ENCODE measurements at regions of chr1 and their contacts with region 1.

Region 1: DNA sequence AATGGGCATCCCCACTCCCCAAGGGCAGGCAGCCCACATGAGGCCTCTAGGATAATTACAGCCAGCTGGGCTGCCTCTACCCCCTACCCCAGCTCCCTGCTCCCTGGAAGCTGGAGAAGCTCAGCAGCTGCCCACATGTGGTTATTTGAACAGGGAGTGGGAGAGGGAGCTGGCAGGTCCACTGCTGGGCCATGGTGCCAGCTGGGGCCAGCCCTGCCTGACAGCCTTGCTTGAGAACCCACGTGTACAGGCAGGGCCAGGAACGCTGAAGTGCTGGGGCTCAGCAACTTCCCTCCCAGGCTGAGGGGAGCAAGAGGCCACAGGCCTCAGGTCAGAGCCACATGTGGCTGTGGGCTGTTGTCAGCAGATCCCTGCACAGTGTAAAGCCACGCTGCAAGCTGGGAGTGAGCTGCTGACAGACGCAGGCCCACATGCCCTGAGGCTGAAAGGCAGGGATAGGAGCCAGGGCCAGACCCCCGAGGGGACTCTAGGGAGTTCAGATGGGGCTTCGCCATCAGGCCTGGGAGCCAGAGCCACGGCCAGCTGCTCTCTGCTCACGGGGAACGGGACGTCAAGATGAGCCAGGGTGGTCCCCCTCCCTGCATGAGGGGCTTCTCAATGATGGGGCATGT is 129.0 kb downstream of the SYF2 start:
- DNase-seq: no peak
- H3K4me3 ChIP-seq: no peak overlapping the region
- H3K27ac ChIP-seq: no peak overlapping the region
- H3K27me3 ChIP-seq: peaks cover 0 to 17% (median 3%) of the 10 kb centered on the region in 45 donors
- CTCF ChIP-seq: no peak

Region 2: GRCh38 chr1:24847995-24848881 is 255.0 kb before region 1 on chr1:
- intact Hi-C with region 1: loop called (anchors 5 kb)
- DNase-seq: peak; percentile 62 to 94 (median 92)
- H3K4me3 ChIP-seq: peak overlapping the region; percentile 44 to 80 (median 63)
- H3K27ac ChIP-seq: peak overlapping the region in 45 of 59 donors; percentile 1 to 86 (median 65)
- H3K27me3 ChIP-seq: no peaks in the 10 kb centered on the region
- CTCF ChIP-seq: peak; percentile 73 to 99 (median 96)

Region 3: GRCh38 chr1:24910751-24911650 is 192.3 kb before region 1 on chr1:
- intact Hi-C with region 1: loop called in 1 of 2 experiments (anchors 10 kb)
- DNase-seq: no peak
- H3K4me3 ChIP-seq: no peak overlapping the region
- H3K27ac ChIP-seq: no peak overlapping the region
- H3K27me3 ChIP-seq: no peaks in the 10 kb centered on the region
- CTCF ChIP-seq: no peak

Region 4: DNA sequence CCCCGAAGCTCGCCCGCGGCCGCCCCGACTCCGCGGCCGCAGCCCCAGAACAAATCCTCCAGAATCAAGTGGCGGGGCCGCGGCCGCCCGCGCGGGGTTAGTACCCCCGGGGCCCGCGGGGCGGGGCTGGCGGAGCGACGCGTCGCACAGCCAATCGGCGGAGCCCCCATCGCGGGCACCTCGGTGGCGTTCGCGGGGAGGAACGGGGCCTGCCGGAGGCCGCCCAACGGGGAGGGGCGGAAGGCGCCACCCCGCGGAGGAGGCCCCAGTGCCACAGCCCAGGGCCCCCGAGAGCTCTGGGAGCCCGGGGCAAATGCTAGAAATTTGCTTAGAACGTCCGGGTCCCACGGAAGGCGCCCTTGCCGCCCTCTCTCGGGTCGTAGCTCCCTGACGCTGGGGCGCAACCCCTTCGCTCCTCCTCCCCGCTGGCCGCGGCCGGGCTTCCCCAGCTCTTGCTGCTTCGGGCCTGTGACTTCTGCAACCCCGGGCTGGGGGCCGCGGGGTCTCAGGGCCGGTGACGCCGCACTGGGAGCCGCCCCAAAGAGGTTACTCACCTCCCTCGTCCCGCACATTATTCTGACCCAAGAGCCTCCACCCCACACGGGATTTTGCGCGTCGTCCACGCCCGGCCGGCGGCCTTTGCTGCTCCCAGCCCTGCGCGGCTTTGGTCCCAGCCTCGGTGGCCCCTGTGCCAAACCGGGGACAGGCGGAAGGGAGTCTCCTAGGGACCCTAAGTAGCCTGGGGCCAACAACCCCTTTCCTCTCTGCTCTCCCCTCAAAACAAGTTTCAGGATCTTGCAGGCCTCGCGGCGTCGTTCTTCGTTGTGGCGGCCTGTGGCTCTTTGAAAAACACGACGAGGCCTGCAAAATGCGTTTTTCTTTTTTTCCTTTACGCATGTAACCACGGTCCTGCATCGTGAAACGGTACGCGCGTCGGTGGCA is 172.8 kb before region 1 on chr1 and contains the start of gene RUNX3:
- intact Hi-C with region 1: loop called in 1 of 2 experiments (anchors 10 kb)
- DNase-seq: no peak
- H3K4me3 ChIP-seq: peak within 1 kb of the TSS in 56 of 59 donors; percentile 4 to 56 (median 34)
- H3K27ac ChIP-seq: peak within 1 kb of the TSS in 13 of 59 donors; percentile 5 to 69 (median 36)
- H3K27me3 ChIP-seq: peaks cover 8 to 98% (median 87%) of the 10 kb centered on the region in 45 donors
- CTCF ChIP-seq: peak in 5 of 56 donors; percentile 8 to 38 (median 24)
- total RNA-seq, gene RUNX3: 0.29 to 3.9 (median 0.96) TPM

Region 5: GRCh38 chr1:25006770-25007169 is 96.5 kb before region 1 on chr1:
- intact Hi-C with region 1: no loop called
- DNase-seq: peak in 1 of 10 donors; percentile 18
- H3K4me3 ChIP-seq: no peak overlapping the region
- H3K27ac ChIP-seq: no peak overlapping the region
- H3K27me3 ChIP-seq: peaks cover 0 to 22% (median 0%) of the 10 kb centered on the region in 45 donors
- CTCF ChIP-seq: no peak

Region 6: DNA sequence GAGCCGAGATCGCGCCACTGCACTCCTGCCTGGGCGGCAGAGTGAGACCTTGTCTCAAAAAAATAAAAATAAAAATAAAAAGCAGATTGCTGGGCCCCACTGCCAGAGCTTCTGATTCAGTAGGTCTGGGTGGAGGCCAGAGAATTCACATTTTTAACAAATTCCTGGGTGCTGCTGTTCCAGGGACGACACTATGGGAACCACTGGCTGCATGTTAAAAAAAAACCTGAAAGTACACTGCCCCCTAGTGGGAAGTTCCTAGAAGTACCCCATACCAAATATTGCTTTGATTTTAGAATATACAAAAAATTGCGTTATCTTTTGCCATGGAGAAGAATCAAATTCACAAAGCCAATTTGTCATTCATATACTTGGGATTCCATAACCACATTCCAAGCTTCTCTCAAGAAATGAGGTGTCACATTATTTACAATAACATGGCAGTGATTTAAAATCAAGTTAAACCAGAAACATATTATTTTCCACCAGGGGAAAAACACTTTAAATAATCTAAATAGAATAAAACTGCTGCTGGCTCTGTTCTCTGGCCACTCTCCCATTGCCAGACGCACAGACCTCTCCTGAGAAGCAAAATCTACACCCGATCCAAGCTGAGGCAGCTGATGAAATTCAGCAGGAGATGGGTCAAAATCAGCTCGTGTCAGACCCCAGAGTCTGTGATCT is 101.7 kb after region 1 on chr1:
- intact Hi-C with region 1: loop called in 1 of 2 experiments (anchors 5 kb)
- DNase-seq: no peak
- H3K4me3 ChIP-seq: no peak overlapping the region
- H3K27ac ChIP-seq: no peak overlapping the region
- H3K27me3 ChIP-seq: peaks cover 0 to 4% (median 0%) of the 10 kb centered on the region in 45 donors
- CTCF ChIP-seq: peak; percentile 75 to 97 (median 88)

Measured in dorsolateral prefrontal cortex (tissue), 120 donors.